Naive thymus-derived CD8-positive, alpha-beta T cell (primary cell): ENCODE measurements at regions of chr19 and their contacts with region 1.

Region 1: GRCh38 chr19:5904352-5905113 is at the start of gene VMAC:
- DNase-seq: peak; percentile 99 to 100 (median 100)
- ATAC-seq: peak; percentile 77 to 80
- H3K4me3 Mint-ChIP-seq: peak within 1 kb of the TSS; percentile 91 to 99 (median 97)
- H3K27ac Mint-ChIP-seq: peak within 1 kb of the TSS; percentile 98 to 100 (median 99)
- H3K4me1 Mint-ChIP-seq: peaks cover 19 to 57% (median 43%) of the 10 kb centered on the region in 4 donors
- H3K27me3 Mint-ChIP-seq: peaks cover 0 to 2% (median 0%) of the 10 kb centered on the region in 5 donors
- polyA plus RNA-seq, gene VMAC: 6.2 to 8.4 (median 7.0) TPM

Region 2: GRCh38 chr19:5790573-5791520 is 113.7 kb before region 1 on chr19 and contains the start of gene DUS3L:
- POLR2A ChIA-PET with region 1: interaction called, 19 read pairs
- DNase-seq: peak; percentile 90 to 98 (median 95)
- ATAC-seq: peak; percentile 92 to 93
- H3K4me3 Mint-ChIP-seq: peak within 1 kb of the TSS; percentile 92 to 100 (median 99)
- H3K27ac Mint-ChIP-seq: peak within 1 kb of the TSS; percentile 99 to 100 (median 100)
- H3K4me1 Mint-ChIP-seq: peaks cover 13 to 21% (median 16%) of the 10 kb centered on the region in 4 donors
- H3K27me3 Mint-ChIP-seq: peaks cover 0 to 2% (median 0%) of the 10 kb centered on the region in 5 donors
- polyA plus RNA-seq, gene DUS3L: 26.3 to 43.2 (median 41.1) TPM

Region 3: GRCh38 chr19:5891938-5892771 is 12.4 kb before region 1 on chr19:
- POLR2A ChIA-PET with region 1: interaction called, 26 read pairs
- DNase-seq: peak in 1 of 10 donors; percentile 17
- ATAC-seq: peak; percentile 51 to 60
- H3K4me3 Mint-ChIP-seq: no peak overlapping the region
- H3K27ac Mint-ChIP-seq: peak overlapping the region in 3 of 10 donors; percentile 25 to 88 (median 52)
- H3K4me1 Mint-ChIP-seq: peaks cover 0 to 7% (median 4%) of the 10 kb centered on the region in 4 donors
- H3K27me3 Mint-ChIP-seq: peaks cover 1 to 20% (median 6%) of the 10 kb centered on the region in 5 donors

Region 4: GRCh38 chr19:5961969-5962945 is 57.7 kb after region 1 on chr19:
- POLR2A ChIA-PET with region 1: interaction called, 61 read pairs
- DNase-seq: peak; percentile 58 to 90 (median 77)
- ATAC-seq: peak; percentile 91 to 96
- H3K4me3 Mint-ChIP-seq: peak overlapping the region; percentile 71 to 92 (median 88)
- H3K27ac Mint-ChIP-seq: peak overlapping the region; percentile 95 to 100 (median 100)
- H3K4me1 Mint-ChIP-seq: peaks cover 46 to 98% (median 96%) of the 10 kb centered on the region in 4 donors
- H3K27me3 Mint-ChIP-seq: no peaks in the 10 kb centered on the region

Region 5: GRCh38 chr19:6030214-6030507 is 125.6 kb after region 1 on chr19:
- POLR2A ChIA-PET with region 1: no interaction called
- DNase-seq: no peak
- ATAC-seq: no peak
- H3K4me3 Mint-ChIP-seq: no peak overlapping the region
- H3K27ac Mint-ChIP-seq: no peak overlapping the region
- H3K4me1 Mint-ChIP-seq: peaks cover 0 to 2% (median 0%) of the 10 kb centered on the region in 4 donors
- H3K27me3 Mint-ChIP-seq: no peaks in the 10 kb centered on the region